A673 (cell line): ENCODE measurements at regions of chr3 and their contacts with region 1.

Region 1: DNA sequence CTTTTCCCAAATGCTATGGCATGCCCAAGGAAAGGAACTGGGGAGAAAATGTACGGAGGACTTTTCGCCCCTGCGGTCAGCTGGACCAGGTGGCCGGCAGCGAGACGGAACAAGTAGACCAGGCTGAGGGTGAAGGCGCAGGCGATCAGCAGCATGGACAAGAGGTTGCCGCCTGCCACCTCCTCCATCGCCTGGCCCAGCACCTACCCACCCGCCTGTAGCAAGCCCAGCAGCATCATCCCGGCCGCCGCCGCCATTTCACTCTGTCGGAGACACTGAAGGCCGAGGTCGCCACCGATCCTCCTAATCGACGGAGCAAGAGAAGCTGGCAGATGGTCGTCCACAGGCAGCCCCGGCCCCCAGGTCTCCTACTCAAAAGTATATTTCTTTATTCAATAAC is 1046.3 kb upstream of the GBE1 start:
- DNase-seq: no peak
- H3K4me3 ChIP-seq: no peak overlapping the region
- H3K27ac ChIP-seq: no peak overlapping the region
- H3K4me1 ChIP-seq: no peaks in the 10 kb centered on the region
- H3K27me3 ChIP-seq: no peaks in the 10 kb centered on the region
- CTCF ChIP-seq: no peak

Region 2: GRCh38 chr3:82743196-82743595 is 64.6 kb before region 1 on chr3:
- CTCF ChIA-PET with region 1: interaction called, 12 read pairs
- POLR2A ChIA-PET with region 1: no interaction called
- intact Hi-C with region 1: no loop called
- DNase-seq: no peak
- H3K4me3 ChIP-seq: no peak overlapping the region
- H3K27ac ChIP-seq: no peak overlapping the region
- H3K4me1 ChIP-seq: no peaks in the 10 kb centered on the region
- H3K27me3 ChIP-seq: no peaks in the 10 kb centered on the region
- CTCF ChIP-seq: no peak

Region 3: GRCh38 chr3:82927309-82928253 is 119.8 kb after region 1 on chr3:
- CTCF ChIA-PET with region 1: no interaction called
- POLR2A ChIA-PET with region 1: no interaction called
- intact Hi-C with region 1: no loop called
- DNase-seq: no peak
- H3K4me3 ChIP-seq: no peak overlapping the region
- H3K27ac ChIP-seq: no peak overlapping the region
- H3K4me1 ChIP-seq: no peaks in the 10 kb centered on the region
- H3K27me3 ChIP-seq: no peaks in the 10 kb centered on the region
- CTCF ChIP-seq: no peak

Region 4: DNA sequence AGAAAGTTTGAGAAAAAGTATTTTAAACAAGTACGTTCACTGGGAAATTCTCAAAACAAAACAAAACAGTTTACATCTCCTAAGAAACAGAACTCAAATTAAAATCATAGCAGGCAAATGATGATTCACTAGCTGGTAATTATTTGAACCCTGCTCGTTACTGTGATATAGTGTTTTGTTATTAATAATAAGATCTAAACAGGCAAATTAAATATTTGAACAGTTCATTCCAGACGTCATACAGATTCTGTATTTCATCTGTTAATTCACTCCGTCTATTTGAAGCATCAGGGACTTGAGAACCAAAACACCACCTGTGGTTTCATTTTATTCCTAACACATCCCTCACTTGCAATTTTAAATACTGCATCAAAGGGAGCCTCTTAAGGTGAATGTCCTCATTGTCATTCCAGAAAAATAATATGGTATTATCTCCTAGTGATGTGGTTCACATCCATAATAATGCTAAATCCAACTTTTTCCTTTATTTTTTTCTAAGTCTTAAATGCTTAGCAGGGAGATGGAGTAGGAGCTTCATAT is 760.1 kb after region 1 on chr3:
- CTCF ChIA-PET with region 1: no interaction called
- POLR2A ChIA-PET with region 1: no interaction called
- intact Hi-C with region 1: no loop called
- DNase-seq: no peak
- H3K4me3 ChIP-seq: no peak overlapping the region
- H3K27ac ChIP-seq: no peak overlapping the region
- H3K4me1 ChIP-seq: no peaks in the 10 kb centered on the region
- H3K27me3 ChIP-seq: no peaks in the 10 kb centered on the region
- CTCF ChIP-seq: no peak